ENCODE measurements at regions of chr1 and their contacts with region 1.

Region 1: DNA sequence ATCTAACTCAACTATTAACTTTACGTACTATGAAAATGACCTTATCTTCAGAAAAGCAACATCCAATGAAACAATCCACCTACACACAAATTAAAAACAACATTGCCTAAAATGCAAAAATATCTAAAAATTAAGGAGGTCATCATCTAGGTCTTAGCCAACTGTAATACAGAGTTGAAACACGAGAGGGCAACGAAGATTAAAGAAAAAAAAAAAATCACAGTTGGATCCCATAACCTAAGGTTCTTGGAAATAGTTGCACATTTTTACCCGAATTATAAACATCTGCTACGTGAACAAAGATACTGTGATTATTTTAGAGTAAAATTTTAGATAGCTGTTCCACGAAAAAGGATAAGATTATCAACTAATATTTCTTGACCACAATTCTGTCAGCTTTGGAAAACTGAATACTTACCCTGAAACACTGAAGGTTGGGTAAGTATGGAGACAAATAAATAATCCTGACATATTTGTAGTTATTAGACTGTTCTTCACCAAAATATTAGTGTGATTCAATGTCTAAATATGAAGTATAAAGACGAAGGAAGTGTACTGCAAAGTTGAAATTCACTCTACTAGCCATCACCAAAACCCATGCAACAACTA is 88.0 kb upstream of the AK4 start:
- DNase-seq: no peak
- ATAC-seq: no peak
- H3K4me3 ChIP-seq: no peak overlapping the region
- H3K27ac ChIP-seq: no peak overlapping the region
- H3K4me1 ChIP-seq: no peaks in the 10 kb centered on the region
- H3K27me3 ChIP-seq: peaks cover 7% of the 10 kb centered on the region
- CTCF ChIP-seq: peak; percentile 68; the same call in 1 of the 2 replicates

Region 2: DNA sequence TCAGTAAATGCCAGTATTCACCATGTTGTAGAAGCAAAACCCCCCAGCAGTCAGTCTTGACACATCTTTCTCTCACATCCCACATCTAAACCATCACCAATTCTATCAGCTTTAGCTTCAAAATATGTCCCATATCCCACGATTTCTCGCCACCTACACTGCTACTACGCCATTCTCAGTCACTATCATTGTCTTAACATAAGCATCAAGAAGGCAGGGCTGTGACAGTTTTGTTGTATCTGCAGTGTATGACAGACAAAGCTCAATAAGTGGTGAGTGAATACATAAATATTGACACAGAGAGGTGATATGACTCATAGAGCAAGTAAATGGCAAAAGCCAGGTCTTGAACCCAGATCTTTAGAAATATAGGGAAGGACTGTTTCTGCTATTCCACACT is 153.6 kb before region 1 on chr1:
- CTCF ChIA-PET with region 1: no interaction called
- POLR2A ChIA-PET with region 1: no interaction called
- in situ Hi-C with region 1: no loop called
- intact Hi-C with region 1: no loop called
- DNase-seq: no peak
- ATAC-seq: peak; percentile 61; the same call in 1 of the 2 replicates
- H3K4me3 ChIP-seq: no peak overlapping the region
- H3K27ac ChIP-seq: no peak overlapping the region
- H3K4me1 ChIP-seq: peaks cover 25% of the 10 kb centered on the region
- H3K27me3 ChIP-seq: no peaks in the 10 kb centered on the region
- CTCF ChIP-seq: no peak

Region 3: DNA sequence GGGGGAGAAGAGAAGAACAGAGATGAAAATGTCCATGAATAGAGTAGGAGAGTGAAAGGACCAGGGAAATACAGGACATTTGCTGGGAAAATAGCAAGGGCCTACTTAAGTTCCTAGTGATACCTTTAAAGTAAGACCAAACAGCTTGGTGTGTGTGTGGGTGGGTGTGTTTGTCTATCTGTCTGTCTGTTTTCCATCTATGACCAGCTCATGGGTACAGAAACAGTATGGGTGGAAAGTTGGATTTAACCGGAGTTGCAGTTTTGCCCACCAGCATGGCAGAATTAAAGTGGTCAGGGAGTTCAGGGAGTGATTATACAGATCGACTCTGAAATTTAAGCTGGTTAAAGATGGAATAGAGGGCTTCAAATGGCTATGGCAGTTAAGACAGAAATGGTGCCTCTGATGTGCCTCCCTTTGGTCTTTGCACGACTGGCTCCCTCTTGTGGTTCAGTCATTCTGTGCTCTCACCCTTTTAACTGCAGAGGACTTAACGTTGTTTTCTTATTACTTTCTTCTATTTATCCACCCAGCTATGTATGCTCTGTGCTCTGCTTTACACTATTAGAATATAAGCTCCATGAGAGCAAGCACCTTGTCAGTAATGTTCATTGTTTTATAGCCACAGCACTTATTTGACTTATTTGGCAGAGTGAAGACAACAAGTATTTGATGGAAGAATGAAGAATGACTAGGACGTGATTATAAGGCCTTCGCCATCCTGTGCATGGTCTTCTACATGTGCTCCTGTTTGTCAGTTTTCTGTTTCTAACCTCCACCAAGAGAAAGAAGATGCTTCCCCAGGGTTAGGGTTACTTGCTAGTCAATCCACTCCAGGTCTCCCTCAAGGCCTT is 15.3 kb after region 1 on chr1:
- CTCF ChIA-PET with region 1: interaction called, 10 read pairs
- POLR2A ChIA-PET with region 1: no interaction called
- in situ Hi-C with region 1: no loop called
- intact Hi-C with region 1: no loop called
- DNase-seq: peak; percentile 51
- ATAC-seq: peak; percentile 94
- H3K4me3 ChIP-seq: no peak overlapping the region
- H3K27ac ChIP-seq: no peak overlapping the region
- H3K4me1 ChIP-seq: no peaks in the 10 kb centered on the region
- H3K27me3 ChIP-seq: peaks cover 8% of the 10 kb centered on the region
- CTCF ChIP-seq: peak; percentile 84

Region 4: DNA sequence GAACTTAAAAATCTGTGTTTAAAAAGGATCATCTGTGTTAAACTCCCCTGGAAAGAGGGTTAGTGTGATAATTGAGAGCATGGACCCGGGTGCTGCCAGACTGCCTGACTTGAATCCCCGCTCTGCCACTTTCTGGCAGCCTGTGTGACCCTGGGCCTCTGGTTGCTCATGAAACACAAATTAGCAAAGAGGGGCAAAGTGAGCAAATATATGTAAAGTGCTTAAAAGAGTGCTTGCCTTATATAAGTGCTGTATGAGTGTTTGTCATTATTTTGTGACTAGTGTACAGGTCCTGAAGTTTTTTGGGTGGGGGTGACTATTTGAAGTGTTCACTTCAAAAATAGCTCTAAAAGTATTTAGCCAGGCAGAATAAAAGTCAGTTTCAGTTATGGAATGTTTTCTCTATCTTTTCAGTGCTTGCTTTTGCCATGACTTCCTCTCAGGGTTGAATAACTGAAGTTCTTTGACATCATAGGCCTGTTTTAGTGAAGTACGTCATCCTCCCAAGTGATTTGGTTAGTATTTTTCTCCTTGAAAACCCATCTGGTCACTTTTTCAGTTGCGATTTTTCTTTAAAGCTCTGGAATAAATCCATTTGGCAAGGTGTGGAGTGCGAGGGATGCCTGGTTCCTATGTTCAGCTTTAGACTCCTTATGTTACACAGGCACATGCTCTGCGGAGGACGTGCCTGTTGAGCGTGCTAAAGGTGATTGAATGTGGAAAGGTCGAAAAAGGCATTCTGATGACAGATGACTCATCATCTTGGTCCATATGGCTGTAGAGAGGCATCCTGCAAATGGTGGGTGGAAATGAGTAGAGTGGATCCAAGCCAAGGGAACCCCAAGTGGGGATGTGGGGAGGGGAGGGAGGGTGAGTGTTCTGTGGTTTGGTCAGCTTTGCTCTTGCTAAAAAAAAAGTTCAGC is 135.7 kb after region 1 on chr1:
- CTCF ChIA-PET with region 1: no interaction called
- POLR2A ChIA-PET with region 1: no interaction called
- in situ Hi-C with region 1: no loop called
- intact Hi-C with region 1: no loop called
- DNase-seq: no peak
- ATAC-seq: no peak
- H3K4me3 ChIP-seq: no peak overlapping the region
- H3K27ac ChIP-seq: no peak overlapping the region
- H3K4me1 ChIP-seq: no peaks in the 10 kb centered on the region
- H3K27me3 ChIP-seq: no peaks in the 10 kb centered on the region
- CTCF ChIP-seq: no peak

Region 5: DNA sequence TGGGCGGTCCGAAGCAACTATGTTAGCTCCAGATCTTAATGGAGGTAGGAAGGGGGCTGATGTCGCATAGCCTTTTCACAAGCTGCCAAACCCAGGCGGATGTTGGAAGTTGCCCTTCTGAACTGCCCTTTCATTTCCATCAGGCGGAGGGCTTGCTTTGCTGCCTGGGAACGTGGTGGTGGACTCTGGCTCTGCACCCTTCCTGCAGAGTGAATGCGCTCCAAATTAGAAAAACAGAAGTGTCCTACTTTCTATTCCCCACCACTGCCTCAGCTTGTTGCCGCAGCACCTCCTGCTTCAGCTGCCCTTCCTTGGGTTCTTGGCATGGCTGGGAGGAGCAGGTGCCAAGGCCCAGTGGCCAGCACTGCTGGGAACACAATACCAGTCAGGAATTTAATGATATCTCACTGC is 148.5 kb after region 1 on chr1:
- CTCF ChIA-PET with region 1: interaction called, 8 read pairs
- POLR2A ChIA-PET with region 1: no interaction called
- in situ Hi-C with region 1: no loop called
- intact Hi-C with region 1: loop called (anchors 1 kb)
- DNase-seq: no peak
- ATAC-seq: no peak
- H3K4me3 ChIP-seq: no peak overlapping the region
- H3K27ac ChIP-seq: no peak overlapping the region
- H3K4me1 ChIP-seq: no peaks in the 10 kb centered on the region
- H3K27me3 ChIP-seq: no peaks in the 10 kb centered on the region
- CTCF ChIP-seq: no peak